Posterior cingulate gyrus (tissue), 11 donors: ENCODE measurements at regions of chr19 and their contacts with region 1.

Region 1: GRCh38 chr19:33176670-33177416 is 17.3 kb upstream of the LRP3 start:
- DNase-seq: peak; percentile 87 to 99 (median 92)

Region 2: DNA sequence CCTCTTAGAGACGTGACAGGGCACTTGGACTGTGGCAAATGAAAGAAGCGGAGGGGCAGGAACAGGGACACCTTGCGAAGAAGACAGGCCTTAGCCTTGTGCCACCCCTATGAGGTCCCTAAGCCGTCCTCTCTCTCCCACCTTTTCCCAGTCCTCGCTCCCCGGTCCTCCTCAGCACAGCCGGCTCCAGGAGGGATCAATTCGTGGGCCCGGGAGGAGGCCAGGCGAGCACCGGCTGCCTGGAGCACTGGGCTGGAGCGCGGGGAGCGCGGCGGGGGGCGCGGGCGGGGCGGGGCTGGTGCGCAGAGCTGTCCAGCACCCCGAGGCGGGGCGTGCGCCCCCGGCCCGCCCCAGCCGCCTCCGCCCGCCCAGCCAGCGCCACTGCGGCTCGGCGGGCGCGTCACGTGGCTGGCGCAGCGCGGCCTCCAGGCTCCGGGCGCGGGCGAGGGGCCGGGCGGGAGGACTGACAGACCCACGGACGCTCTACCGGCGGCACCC is 17.1 kb after region 1 on chr19 and contains the start of gene LRP3:
- intact Hi-C with region 1: loop called (anchors 1 kb)
- DNase-seq: peak in 6 of 10 donors; percentile 50 to 90 (median 74)

Region 3: GRCh38 chr19:33245948-33246708 is 69.3 kb after region 1 on chr19:
- intact Hi-C with region 1: no loop called
- DNase-seq: peak in 3 of 10 donors; percentile 17 to 79 (median 77)

Region 4: DNA sequence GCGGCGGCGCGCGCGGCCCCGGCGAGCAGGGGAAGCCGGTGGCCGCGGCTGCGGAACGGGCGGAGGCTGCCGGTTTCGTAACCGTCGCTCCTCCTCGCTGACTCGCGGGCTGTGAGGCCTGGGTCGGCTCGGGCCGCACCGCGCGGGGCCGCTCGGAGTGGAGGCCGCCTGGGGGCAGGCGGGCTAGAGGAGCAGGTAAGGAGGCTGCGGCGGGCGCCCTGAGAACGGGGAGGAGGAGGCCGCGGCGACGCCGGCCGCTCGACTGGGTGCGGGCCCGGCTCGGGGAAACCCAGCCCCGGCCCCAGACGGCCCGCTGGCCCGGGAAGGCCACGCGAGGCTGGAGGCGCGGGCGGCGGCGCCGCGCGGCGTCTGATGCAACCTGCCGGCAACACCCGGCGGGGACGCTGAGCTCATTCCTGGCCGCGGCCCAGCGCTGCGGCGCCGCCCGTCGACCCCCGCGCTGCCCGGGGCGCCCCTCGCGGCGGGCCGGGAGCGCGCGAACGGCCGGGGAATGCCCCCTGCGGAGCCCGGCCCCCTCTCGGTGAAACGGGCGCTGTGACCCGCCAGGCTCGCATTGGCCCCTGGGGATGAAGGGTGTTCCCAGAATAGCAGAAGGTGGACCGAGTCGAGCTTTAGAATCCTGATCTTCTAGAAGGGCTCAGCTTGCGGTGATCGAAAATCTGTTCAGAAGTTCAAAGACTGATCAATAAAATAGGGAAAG is 197.0 kb after region 1 on chr19 and contains the start of gene CEBPG:
- intact Hi-C with region 1: loop called (anchors 10 kb)
- DNase-seq: peak in 3 of 10 donors; percentile 27 to 87 (median 78)

Region 5: DNA sequence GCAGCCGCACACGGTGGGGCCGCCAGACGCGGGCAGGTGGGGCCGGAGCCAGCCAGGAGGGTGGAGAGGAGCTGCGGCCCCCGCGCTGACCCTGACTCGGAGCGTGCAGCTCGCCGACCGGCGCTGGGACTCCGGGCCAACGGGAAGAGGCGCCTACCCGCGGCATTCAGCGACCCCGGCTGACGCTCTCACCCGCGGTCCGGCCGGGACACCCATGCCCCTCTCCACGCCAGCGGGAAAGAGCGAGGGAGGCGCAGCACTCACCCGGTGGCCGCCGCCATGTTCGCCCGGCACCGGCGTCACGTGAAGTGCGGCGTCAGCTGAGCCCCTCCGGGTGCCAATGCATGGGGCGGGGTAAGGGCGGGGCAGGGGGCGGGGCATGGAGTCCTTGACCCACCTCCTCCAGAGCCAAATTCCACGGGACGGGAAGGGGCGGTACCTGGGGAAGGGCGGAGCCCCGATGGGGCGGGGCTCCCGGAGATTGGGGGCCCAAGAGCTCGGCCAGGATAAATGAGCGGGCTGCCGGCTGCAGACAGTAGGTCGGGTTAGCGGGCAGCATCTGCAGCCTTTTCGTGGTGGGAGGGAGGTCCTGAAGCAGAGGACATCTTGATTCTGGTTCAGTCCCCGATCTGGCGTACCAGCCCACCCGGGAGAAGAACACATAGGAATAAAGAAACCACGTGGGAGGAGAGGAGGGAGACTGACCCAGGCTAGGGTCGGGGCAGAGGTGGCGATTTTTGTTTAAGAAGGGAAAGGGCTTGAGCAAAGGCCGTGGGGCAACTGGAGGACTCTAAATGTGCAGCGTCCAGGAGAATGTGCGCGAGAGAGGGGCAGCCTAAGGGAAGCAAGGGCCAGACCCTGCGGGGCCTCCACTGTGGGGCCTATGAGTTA is 344.9 kb after region 1 on chr19 and contains the start of gene PEPD:
- intact Hi-C with region 1: loop called (anchors 10 kb)
- DNase-seq: peak; percentile 85 to 99 (median 93)